ENCODE measurements at regions of chr17 and their contacts with region 1.

Region 1: DNA sequence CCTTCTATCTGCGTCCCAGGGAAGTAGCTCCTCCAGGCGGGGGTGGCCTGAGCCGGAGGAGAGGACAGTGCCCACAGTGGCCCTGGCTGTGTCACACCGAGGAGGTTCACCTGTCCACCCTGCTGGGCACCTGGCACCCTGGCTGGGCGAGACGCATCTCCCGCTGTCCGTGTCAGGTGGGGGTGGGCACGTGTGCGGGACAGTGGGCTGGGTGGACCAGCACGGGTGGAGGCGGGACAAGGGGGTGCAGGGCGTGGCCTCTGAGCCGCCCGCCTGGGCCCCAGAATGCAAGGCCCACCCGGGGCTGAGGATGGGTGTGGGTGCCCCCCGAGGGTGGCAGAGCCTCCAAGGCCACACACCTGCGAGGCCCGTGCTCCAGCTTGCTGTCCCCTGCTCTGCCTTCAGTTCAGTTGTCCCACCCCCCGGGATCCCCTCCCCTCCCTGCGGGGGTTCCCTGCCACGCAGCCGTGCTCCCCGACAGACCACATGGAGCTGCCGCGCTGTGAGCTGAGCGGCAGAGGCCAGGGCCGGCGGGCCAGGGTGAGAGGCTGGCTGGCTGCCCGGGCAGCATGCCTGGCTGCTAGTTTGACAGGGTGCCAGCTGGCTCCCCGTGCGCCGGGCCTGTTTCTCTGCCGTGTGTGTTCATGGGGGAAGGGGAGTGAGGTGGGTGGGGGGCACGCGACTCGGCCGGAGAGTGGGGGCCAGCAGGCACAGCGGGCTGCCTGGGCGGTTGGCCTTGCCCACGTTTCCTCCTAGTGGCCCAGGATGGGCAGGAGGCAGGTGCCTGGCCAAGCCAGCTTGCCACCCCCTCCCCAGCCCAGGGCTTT is 33.9 kb downstream of the BAHCC1 start:
- DNase-seq: no peak
- ATAC-seq: no peak
- H3K4me3 Mint-ChIP-seq: no peak overlapping the region
- H3K27ac Mint-ChIP-seq: no peak overlapping the region
- H3K4me1 Mint-ChIP-seq: peaks cover 7% of the 10 kb centered on the region
- H3K27me3 Mint-ChIP-seq: peaks cover 27% of the 10 kb centered on the region
- CTCF ChIP-seq: no peak

Region 2: DNA sequence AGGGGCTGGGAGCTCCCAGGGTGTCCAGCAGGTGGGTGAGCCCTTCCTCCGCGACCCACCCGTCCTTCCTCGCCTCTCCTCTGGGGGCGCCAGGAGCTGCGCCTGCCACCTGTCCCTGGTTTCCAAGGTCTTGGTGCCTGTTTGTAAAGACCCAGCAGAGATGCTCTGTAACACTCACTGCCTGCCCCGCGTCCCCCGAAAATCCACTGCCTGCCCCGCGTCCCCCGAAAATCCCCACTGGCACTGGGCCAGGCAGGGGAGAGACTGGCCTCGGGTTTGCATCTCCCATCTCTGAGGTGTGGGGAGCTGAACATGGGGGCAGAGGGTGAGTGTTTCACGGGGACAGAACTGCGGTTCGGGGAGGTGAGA is 11.7 kb after region 1 on chr17:
- CTCF ChIA-PET with region 1: interaction called, 14 read pairs
- POLR2A ChIA-PET with region 1: interaction called, 3 read pairs
- intact Hi-C with region 1: no loop called
- DNase-seq: peak; percentile 53
- ATAC-seq: no peak
- H3K4me3 Mint-ChIP-seq: no peak overlapping the region
- H3K27ac Mint-ChIP-seq: no peak overlapping the region
- H3K4me1 Mint-ChIP-seq: peaks cover 4% of the 10 kb centered on the region
- H3K27me3 Mint-ChIP-seq: no peaks in the 10 kb centered on the region
- CTCF ChIP-seq: peak; percentile 58

Measured in activated CD8-positive, alpha-beta T cell treated with anti-CD3 and anti-CD28 coated beads for 36 hours (primary cell).